ENCODE measurements at regions of chr16 and their contacts with region 1.

Region 1: GRCh38 chr16:3059000-3059722 is 6.3 kb upstream of the IL32 start:
- DNase-seq: peak; percentile 92
- H3K4me3 Mint-ChIP-seq: peak overlapping the region; percentile 91
- H3K27ac Mint-ChIP-seq: peak overlapping the region; percentile 95
- H3K4me1 Mint-ChIP-seq: peaks cover 68% of the 10 kb centered on the region
- H3K27me3 Mint-ChIP-seq: no peaks in the 10 kb centered on the region

Region 2: DNA sequence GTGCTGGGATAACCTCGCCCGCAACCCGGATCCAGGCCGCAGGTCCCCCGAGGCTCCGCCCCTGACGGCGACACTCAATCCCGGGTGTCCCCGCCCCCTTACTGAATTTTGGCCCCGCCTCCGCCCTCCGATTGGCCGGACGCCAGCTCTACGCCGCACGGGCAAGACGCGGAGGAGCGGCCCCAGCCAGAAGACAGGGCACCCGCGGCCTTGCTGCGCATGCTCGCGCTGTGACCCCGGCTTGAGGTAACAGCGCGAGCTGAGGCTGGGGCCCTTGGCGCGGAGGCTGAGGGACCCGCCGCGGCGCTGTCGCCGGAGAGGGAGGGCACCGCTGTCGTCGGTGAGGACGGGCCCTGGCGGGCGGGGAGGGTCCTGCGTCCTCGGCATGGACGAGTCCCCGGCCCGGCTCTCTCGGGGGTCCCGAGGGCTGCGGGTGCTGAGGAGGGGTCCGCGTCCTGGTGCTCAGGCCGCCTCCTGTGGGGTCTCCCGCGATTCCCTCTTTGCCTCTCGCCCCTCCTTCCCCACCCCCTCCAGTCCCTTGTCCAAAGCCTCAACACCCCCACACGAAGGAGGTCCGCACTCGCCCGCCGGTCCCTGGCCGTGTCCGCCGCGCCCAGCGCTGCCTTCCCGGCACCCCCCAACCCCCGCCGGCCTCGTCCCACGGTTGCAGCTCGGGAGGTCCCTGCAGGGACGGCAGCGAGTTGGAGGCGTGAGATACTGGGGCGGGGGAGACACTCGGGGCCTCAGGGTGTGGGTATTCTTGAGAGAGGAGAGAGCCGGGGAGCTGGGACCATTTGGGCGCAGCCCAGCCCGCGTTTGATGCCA is 175.9 kb before region 1 on chr16 and contains the start of gene FLYWCH2:
- CTCF ChIA-PET with region 1: no interaction called
- POLR2A ChIA-PET with region 1: no interaction called
- intact Hi-C with region 1: no loop called
- DNase-seq: peak; percentile 100
- H3K4me3 Mint-ChIP-seq: peak within 1 kb of the TSS; percentile 90
- H3K27ac Mint-ChIP-seq: peak within 1 kb of the TSS; percentile 97
- H3K4me1 Mint-ChIP-seq: peaks cover 11% of the 10 kb centered on the region
- H3K27me3 Mint-ChIP-seq: no peaks in the 10 kb centered on the region
- total RNA-seq, gene FLYWCH2: 19.1 to 19.4 TPM

Region 3: GRCh38 chr16:3003582-3004302 is 55.4 kb before region 1 on chr16:
- CTCF ChIA-PET with region 1: interaction called, 11 read pairs
- POLR2A ChIA-PET with region 1: no interaction called
- intact Hi-C with region 1: no loop called
- DNase-seq: peak; percentile 99
- H3K4me3 Mint-ChIP-seq: peak overlapping the region; percentile 48
- H3K27ac Mint-ChIP-seq: peak overlapping the region; percentile 58
- H3K4me1 Mint-ChIP-seq: peaks cover 24% of the 10 kb centered on the region
- H3K27me3 Mint-ChIP-seq: peaks cover 5% of the 10 kb centered on the region

Region 4: GRCh38 chr16:3045357-3045728 is 13.8 kb before region 1 on chr16:
- CTCF ChIA-PET with region 1: interaction called, 16 read pairs
- POLR2A ChIA-PET with region 1: interaction called, 4 read pairs
- intact Hi-C with region 1: no loop called
- DNase-seq: peak; percentile 54
- H3K4me3 Mint-ChIP-seq: peak overlapping the region; percentile 68
- H3K27ac Mint-ChIP-seq: no peak overlapping the region
- H3K4me1 Mint-ChIP-seq: peaks cover 14% of the 10 kb centered on the region
- H3K27me3 Mint-ChIP-seq: peaks cover 30% of the 10 kb centered on the region

Region 5: DNA sequence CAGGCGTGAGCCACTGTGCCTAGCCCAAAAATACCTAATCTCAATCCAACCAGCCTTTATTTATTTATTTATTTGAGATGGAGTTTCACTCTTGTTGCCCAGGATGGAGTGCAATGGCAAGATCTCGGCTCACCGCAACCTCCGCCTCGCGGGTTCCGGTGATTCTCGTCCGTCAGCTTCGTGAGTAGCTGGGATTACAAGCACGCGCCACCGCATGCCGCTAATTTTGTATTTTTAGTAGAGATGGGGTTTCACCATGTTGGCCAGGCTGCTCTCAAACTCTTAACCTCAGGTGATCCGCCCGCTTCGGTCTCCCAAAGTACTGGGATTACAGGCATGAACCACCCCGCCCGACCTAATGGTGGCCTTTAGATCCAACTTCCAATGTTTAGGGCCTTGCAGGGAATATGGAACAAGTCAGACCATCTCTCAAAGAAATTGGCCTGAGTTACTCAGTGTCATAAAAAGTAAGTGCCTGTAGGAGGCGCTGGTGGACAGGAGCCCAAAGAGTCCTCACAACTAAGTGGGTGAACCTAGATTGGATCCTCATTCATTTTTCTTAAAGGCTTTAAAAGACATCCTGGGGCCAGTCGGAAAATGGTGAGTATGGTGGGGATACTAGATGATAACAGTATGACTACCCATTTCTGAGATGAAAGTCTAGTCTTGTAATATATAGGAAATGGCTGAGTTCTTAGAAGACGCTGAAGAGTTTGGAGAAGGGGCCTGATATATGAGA is 35.3 kb after region 1 on chr16:
- CTCF ChIA-PET with region 1: interaction called, 10 read pairs
- POLR2A ChIA-PET with region 1: interaction called, 3 read pairs
- intact Hi-C with region 1: loop called (anchors 1 kb)
- DNase-seq: peak; percentile 75
- H3K4me3 Mint-ChIP-seq: peak overlapping the region; percentile 25
- H3K27ac Mint-ChIP-seq: peak overlapping the region; percentile 90
- H3K4me1 Mint-ChIP-seq: peaks cover 27% of the 10 kb centered on the region
- H3K27me3 Mint-ChIP-seq: no peaks in the 10 kb centered on the region

Region 6: GRCh38 chr16:3123986-3124886 is 65.1 kb after region 1 on chr16:
- CTCF ChIA-PET with region 1: interaction called, 270 read pairs
- POLR2A ChIA-PET with region 1: interaction called, 17 read pairs
- intact Hi-C with region 1: loop called (anchors 1 kb)
- DNase-seq: peak; percentile 98
- H3K4me3 Mint-ChIP-seq: peak overlapping the region; percentile 98
- H3K27ac Mint-ChIP-seq: peak overlapping the region; percentile 95
- H3K4me1 Mint-ChIP-seq: peaks cover 21% of the 10 kb centered on the region
- H3K27me3 Mint-ChIP-seq: no peaks in the 10 kb centered on the region

Region 7: DNA sequence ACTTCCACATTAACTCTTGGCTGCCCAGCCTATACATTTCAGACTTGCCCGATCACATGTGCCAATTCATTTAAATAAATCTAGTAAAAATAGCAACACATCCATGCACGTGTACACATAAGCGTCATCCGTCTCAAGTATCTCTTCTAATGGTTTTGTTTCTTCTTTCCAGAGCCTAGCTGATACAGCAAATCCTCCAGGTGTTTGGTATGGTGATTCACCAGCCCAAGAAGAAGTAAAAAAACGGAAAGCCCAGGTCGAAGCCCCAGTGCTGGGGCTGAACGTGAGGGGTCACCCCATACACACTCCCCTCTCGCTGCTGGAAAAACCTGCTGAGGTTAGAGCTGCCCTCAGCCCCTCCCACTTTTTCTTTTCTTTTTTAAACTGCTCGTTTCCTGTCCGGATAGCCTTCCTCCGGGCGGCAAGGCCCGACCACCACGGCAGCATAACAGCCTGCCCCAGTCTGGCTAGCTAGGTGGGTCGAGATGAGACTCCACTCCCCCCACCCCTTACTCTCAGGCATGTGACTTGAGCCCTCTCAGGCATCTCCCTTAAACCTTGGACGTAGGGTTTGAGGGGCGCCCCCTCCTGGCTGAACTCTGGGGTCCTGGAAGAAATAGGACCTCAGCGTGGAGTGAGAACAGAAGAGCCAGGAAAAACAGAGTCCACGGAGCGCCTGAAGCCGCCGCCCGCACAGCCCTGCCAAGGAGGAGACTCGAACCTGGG is 114.9 kb after region 1 on chr16:
- CTCF ChIA-PET with region 1: interaction called, 27 read pairs
- POLR2A ChIA-PET with region 1: no interaction called
- intact Hi-C with region 1: no loop called
- DNase-seq: peak; percentile 57
- H3K4me3 Mint-ChIP-seq: peak overlapping the region; percentile 71
- H3K27ac Mint-ChIP-seq: peak overlapping the region; percentile 19
- H3K4me1 Mint-ChIP-seq: peaks cover 34% of the 10 kb centered on the region
- H3K27me3 Mint-ChIP-seq: peaks cover 51% of the 10 kb centered on the region